CD14-positive monocyte (primary cell): ENCODE measurements at regions of chr7 and their contacts with region 1.

Region 1: GRCh38 chr7:140653319-140654108 is 12.9 kb upstream of the DENND2A start:
- DNase-seq: peak in 2 of 3 donors; percentile 55 to 65
- H3K4me3 ChIP-seq: no peak overlapping the region
- H3K4me3 Mint-ChIP-seq: peak overlapping the region in 1 of 2 donors; percentile 48
- H3K27ac ChIP-seq: no peak overlapping the region
- H3K27ac Mint-ChIP-seq: no peak overlapping the region
- H3K4me1 ChIP-seq: peaks cover 30 to 38% of the 10 kb centered on the region in 2 donors
- H3K4me1 Mint-ChIP-seq: peaks cover 47% of the 10 kb centered on the region
- H3K27me3 ChIP-seq: no peaks in the 10 kb centered on the region
- H3K27me3 Mint-ChIP-seq: peaks cover 4 to 7% (median 6%) of the 10 kb centered on the region in 3 donors
- CTCF ChIP-seq: peak; percentile 97

Region 2: GRCh38 chr7:140375892-140376730 is 277.4 kb before region 1 on chr7:
- intact Hi-C with region 1: no loop called
- DNase-seq: no peak
- H3K4me3 ChIP-seq: no peak overlapping the region
- H3K4me3 Mint-ChIP-seq: peak overlapping the region in 1 of 2 donors; percentile 3
- H3K27ac ChIP-seq: no peak overlapping the region
- H3K27ac Mint-ChIP-seq: peak overlapping the region in 2 of 7 donors; percentile 50 to 55
- H3K4me1 ChIP-seq: no peaks in the 10 kb centered on the region
- H3K4me1 Mint-ChIP-seq: peaks cover 2% of the 10 kb centered on the region
- H3K27me3 ChIP-seq: no peaks in the 10 kb centered on the region
- H3K27me3 Mint-ChIP-seq: peaks cover 4 to 5% (median 4%) of the 10 kb centered on the region in 3 donors
- CTCF ChIP-seq: no peak

Region 3: DNA sequence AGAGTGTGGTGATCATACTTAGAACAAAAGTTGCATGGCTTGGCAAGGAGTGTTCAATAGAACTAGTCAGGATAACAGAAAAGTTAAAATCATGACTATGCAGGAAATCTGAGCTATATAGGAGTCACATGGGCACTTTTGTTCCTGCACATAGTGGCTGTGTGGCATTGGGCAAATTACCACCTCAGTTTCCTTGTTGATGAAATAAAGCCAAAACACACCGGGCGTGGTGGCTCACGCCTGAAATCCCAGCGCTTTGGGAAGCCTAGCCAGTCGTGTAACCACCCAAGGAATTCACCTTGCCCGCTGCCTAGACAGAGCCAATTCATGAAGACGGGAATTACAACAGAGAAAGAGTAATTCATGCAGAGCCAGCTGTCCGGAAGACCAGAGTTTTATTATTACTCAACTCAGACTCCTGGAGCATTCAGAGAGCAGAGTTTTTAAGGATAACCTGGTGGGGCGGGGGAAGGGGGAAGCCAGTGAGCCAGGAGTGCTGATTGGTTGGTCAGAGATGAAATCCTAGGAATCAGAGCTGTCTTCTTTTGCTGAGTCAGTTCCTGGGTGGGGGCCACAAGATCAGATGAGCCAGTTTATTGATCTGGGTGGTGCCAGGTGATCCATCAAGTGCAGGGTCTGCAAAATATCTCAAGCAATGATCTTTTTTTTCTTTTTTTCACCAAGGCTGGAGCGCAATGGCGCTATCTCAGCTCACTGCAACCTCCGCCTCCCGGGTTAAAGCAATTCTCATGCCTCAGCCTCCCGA is 167.8 kb before region 1 on chr7:
- intact Hi-C with region 1: loop called in 1 of 2 experiments (anchors 10 kb)
- DNase-seq: peak in 1 of 3 donors; percentile 10
- H3K4me3 ChIP-seq: peak overlapping the region in 1 of 3 experiments; percentile 9
- H3K4me3 Mint-ChIP-seq: peak overlapping the region in 1 of 2 donors; percentile 63
- H3K27ac ChIP-seq: no peak overlapping the region
- H3K27ac Mint-ChIP-seq: peak overlapping the region in 4 of 7 donors; percentile 13 to 81 (median 50)
- H3K4me1 ChIP-seq: peaks cover 27 to 28% of the 10 kb centered on the region in 2 donors
- H3K4me1 Mint-ChIP-seq: peaks cover 29% of the 10 kb centered on the region
- H3K27me3 ChIP-seq: no peaks in the 10 kb centered on the region
- H3K27me3 Mint-ChIP-seq: peaks cover 0 to 6% (median 0%) of the 10 kb centered on the region in 3 donors
- CTCF ChIP-seq: no peak

Region 4: DNA sequence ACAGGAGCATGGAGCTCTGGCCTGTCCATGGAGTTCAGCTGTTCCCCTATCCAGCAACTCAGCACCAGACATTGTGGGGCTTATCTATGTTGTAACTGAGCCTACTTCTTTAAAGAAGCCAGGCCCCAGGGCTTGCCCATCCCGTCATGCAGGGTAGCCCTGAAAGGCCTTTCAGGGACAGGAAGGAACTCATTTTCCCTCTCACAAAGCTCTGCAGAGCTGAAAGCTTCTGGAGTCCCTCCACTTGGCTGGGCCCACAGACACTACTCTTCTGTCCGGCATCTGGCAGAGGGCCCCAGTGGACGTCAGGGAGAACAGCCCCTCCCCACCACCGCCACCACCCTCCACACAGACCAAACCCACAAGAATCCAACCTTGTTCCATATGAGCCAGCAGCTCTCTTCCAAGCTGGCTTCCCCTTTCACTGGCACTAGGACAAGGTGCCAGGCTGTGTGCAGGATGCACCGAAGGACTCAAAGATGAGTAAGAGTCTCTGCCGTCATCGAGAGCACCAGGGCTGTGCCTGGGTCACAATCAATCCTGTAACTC is 46.0 kb before region 1 on chr7:
- intact Hi-C with region 1: no loop called
- DNase-seq: no peak
- H3K4me3 ChIP-seq: no peak overlapping the region
- H3K4me3 Mint-ChIP-seq: no peak overlapping the region
- H3K27ac ChIP-seq: no peak overlapping the region
- H3K27ac Mint-ChIP-seq: peak overlapping the region in 1 of 7 donors; percentile 55
- H3K4me1 ChIP-seq: no peaks in the 10 kb centered on the region
- H3K4me1 Mint-ChIP-seq: no peaks in the 10 kb centered on the region
- H3K27me3 ChIP-seq: no peaks in the 10 kb centered on the region
- H3K27me3 Mint-ChIP-seq: peaks cover 2 to 8% (median 4%) of the 10 kb centered on the region in 3 donors
- CTCF ChIP-seq: no peak

Region 5: DNA sequence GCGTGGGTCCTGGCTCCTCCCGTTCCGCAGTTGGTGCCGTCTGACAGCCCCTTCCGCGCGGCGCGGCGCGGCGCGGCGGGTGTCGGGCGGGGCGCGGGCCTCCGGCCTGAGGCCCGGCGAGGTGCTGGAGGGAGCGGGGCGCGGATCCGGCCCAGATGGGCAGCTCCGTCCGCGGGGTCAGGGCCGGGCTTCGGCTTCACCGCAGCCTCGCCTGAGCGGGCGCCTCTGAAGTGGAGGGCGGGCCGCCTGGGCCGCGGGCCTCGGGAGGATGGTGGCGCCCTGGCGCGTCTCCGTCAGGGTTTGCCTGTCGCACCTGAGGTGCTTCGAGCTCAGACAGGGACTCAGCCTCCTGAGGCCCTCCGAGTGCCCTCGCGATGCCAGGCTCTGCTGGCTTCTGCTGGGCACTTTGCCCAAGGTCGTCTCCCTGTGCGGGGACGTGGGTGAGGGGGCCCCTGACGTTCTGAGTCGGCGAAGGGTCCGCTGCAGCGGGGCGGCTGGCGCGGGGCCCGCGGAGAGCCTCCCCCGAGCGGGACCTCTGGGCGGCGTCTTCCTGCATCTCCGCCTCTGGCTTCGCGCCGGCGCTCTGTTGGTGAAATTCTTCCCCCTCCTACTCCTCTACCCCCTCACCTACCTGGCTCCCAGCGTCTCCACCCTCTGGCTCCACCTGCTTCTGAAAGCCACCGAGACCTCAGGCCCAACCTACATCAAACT is 19.7 kb after region 1 on chr7:
- intact Hi-C with region 1: no loop called
- DNase-seq: peak in 1 of 3 donors; percentile 5
- H3K4me3 ChIP-seq: peak overlapping the region; percentile 60 to 77 (median 62)
- H3K4me3 Mint-ChIP-seq: peak overlapping the region; percentile 88 to 95
- H3K27ac ChIP-seq: peak overlapping the region in 1 of 2 donors; percentile 66
- H3K27ac Mint-ChIP-seq: peak overlapping the region in 6 of 7 donors; percentile 19 to 89 (median 78)
- H3K4me1 ChIP-seq: peaks cover 42 to 49% of the 10 kb centered on the region in 2 donors
- H3K4me1 Mint-ChIP-seq: peaks cover 42% of the 10 kb centered on the region
- H3K27me3 ChIP-seq: no peaks in the 10 kb centered on the region
- H3K27me3 Mint-ChIP-seq: peaks cover 2 to 5% (median 3%) of the 10 kb centered on the region in 3 donors
- CTCF ChIP-seq: no peak

Region 6: GRCh38 chr7:140767418-140767817 is 113.9 kb after region 1 on chr7:
- intact Hi-C with region 1: no loop called
- DNase-seq: no peak
- H3K4me3 ChIP-seq: no peak overlapping the region
- H3K4me3 Mint-ChIP-seq: no peak overlapping the region
- H3K27ac ChIP-seq: no peak overlapping the region
- H3K27ac Mint-ChIP-seq: no peak overlapping the region
- H3K4me1 ChIP-seq: no peaks in the 10 kb centered on the region
- H3K4me1 Mint-ChIP-seq: no peaks in the 10 kb centered on the region
- H3K27me3 ChIP-seq: no peaks in the 10 kb centered on the region
- H3K27me3 Mint-ChIP-seq: no peaks in the 10 kb centered on the region
- CTCF ChIP-seq: no peak

Region 7: GRCh38 chr7:141014524-141015395 is 361.2 kb after region 1 on chr7 and contains the start of gene MRPS33:
- intact Hi-C with region 1: loop called in 1 of 2 experiments (anchors 10 kb)
- DNase-seq: peak; percentile 89 to 93 (median 91)
- H3K4me3 ChIP-seq: peak within 1 kb of the TSS; percentile 55 to 83 (median 78)
- H3K4me3 Mint-ChIP-seq: peak within 1 kb of the TSS; percentile 92 to 98
- H3K27ac ChIP-seq: peak within 1 kb of the TSS; percentile 71 to 92
- H3K27ac Mint-ChIP-seq: peak within 1 kb of the TSS; percentile 93 to 99 (median 96)
- H3K4me1 ChIP-seq: peaks cover 12 to 18% of the 10 kb centered on the region in 2 donors
- H3K4me1 Mint-ChIP-seq: peaks cover 21% of the 10 kb centered on the region
- H3K27me3 ChIP-seq: peaks cover 12 to 13% of the 10 kb centered on the region in 2 donors
- H3K27me3 Mint-ChIP-seq: peaks cover 14 to 22% (median 16%) of the 10 kb centered on the region in 3 donors
- CTCF ChIP-seq: peak; percentile 43
- polyA plus RNA-seq, gene MRPS33: 8.9 to 52.7 (median 45.0) TPM